ENCODE measurements at regions of chr4 and their contacts with region 1.

Region 1: DNA sequence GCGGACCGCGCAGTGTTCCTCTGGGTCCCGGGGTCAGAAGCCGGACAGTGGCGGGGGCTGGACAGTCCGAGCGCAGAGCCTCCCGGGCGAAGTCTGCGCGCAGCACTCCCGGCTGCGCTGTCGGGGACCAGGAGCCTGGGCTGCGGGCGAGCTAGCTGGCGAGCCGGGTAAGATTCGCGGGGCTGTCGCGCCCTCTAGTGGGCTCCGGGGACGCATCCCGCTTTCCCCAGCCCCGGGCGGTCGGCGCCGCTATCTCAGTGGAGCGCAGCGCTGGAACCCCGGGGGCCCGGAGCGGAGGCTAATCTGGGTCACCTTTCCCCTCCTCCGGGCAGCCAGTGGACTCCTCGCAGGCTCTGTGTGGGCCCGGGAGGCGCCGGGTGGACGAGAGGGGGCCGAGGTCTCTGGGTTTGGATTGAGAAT is 4.2 kb downstream of the PDGFRA start:
- DNase-seq: peak; percentile 83 to 88 (median 85)
- ATAC-seq: peak; percentile 94
- H3K4me3 ChIP-seq: peak overlapping the region; percentile 17
- H3K4me1 ChIP-seq: peaks cover 29% of the 10 kb centered on the region
- CTCF ChIP-seq: peak; percentile 62

Region 2: GRCh38 chr4:53702334-53703266 is 530.7 kb before region 1 on chr4:
- intact Hi-C with region 1: loop called in 1 of 2 experiments (anchors 5 kb)
- DNase-seq: peak; percentile 84 to 85 (median 84)
- ATAC-seq: peak; percentile 92
- H3K4me3 ChIP-seq: no peak overlapping the region
- H3K4me1 ChIP-seq: peaks cover 13% of the 10 kb centered on the region
- CTCF ChIP-seq: no peak

Region 3: DNA sequence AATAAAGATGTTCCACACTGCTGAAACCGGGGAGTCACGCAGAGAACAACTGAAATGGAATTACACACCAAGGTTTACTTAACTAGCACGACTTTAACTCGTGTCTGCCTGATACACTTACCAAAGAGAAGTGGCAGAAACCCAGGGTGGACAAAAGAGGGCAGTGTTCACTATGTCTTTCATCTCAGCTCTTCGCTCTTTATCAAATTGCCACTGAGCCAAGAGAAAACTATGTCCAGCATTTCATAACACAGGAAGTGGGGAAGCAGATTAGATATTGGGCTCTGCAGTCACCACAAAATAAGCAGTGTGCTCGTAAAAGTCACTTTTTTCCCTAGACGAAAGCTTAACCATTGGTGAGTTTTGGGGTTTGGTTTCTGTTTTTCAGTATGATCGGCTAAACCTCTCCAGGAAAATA is 324.6 kb before region 1 on chr4:
- intact Hi-C with region 1: loop called in 1 of 2 experiments (anchors 2 kb)
- DNase-seq: peak in 1 of 3 donors; percentile 38
- ATAC-seq: peak; percentile 91
- H3K4me3 ChIP-seq: no peak overlapping the region
- H3K4me1 ChIP-seq: peaks cover 6% of the 10 kb centered on the region
- CTCF ChIP-seq: peak; percentile 33

Region 4: DNA sequence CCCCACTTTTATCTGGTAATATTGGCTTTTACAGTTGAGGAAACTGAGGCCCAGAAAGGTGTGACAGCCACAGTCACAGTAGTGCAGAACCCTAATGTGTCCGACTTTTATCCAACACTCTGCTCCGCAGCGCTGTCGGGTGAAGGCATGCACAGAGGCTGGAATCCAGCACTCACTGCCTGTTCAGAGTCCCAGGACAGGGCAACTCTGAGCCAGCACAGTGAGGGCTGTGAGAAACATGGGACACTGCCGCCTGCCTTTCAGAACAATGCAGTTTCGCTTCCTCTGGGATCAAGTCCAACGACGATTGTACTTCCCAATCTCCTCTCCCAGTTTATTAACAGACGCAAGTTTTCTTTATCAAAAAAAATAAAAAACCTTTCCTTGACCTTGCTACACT is 46.1 kb before region 1 on chr4:
- intact Hi-C with region 1: no loop called
- DNase-seq: peak in 1 of 3 donors; percentile 23
- ATAC-seq: no peak
- H3K4me3 ChIP-seq: no peak overlapping the region
- H3K4me1 ChIP-seq: no peaks in the 10 kb centered on the region
- CTCF ChIP-seq: no peak